Mammary epithelial cell (primary cell): ENCODE measurements at regions of chr14 and their contacts with region 1.

Region 1: GRCh38 chr14:64708148-64709004 is 4.2 kb downstream of the PLEKHG3 start:
- DNase-seq: peak; percentile 89
- H3K4me3 ChIP-seq: peak overlapping the region; percentile 23 to 39 (median 31)
- H3K27ac ChIP-seq: peak overlapping the region; percentile 86
- H3K4me1 ChIP-seq: peaks cover 47% of the 10 kb centered on the region
- H3K27me3 ChIP-seq: no peaks in the 10 kb centered on the region
- CTCF ChIP-seq: no peak

Region 2: GRCh38 chr14:64604881-64605280 is 103.5 kb before region 1 on chr14:
- CTCF ChIA-PET with region 1: no interaction called
- dilution Hi-C with region 1: no loop called
- in situ Hi-C with region 1: no loop called
- intact Hi-C with region 1: no loop called
- DNase-seq: peak; percentile 57
- H3K4me3 ChIP-seq: no peak overlapping the region
- H3K27ac ChIP-seq: no peak overlapping the region
- H3K4me1 ChIP-seq: no peaks in the 10 kb centered on the region
- H3K27me3 ChIP-seq: peaks cover 4% of the 10 kb centered on the region
- CTCF ChIP-seq: no peak

Region 3: GRCh38 chr14:64720131-64720576 is 11.8 kb after region 1 on chr14:
- CTCF ChIA-PET with region 1: no interaction called
- dilution Hi-C with region 1: no loop called
- in situ Hi-C with region 1: no loop called
- intact Hi-C with region 1: loop called (anchors 1 kb)
- DNase-seq: peak; percentile 98
- H3K4me3 ChIP-seq: no peak overlapping the region
- H3K27ac ChIP-seq: peak overlapping the region; percentile 89
- H3K4me1 ChIP-seq: peaks cover 98% of the 10 kb centered on the region
- H3K27me3 ChIP-seq: no peaks in the 10 kb centered on the region
- CTCF ChIP-seq: no peak

Region 4: GRCh38 chr14:64726585-64726890 is 18.2 kb after region 1 on chr14:
- CTCF ChIA-PET with region 1: no interaction called
- dilution Hi-C with region 1: no loop called
- in situ Hi-C with region 1: no loop called
- intact Hi-C with region 1: loop called (anchors 1 kb)
- DNase-seq: peak; percentile 99
- H3K4me3 ChIP-seq: no peak overlapping the region
- H3K27ac ChIP-seq: peak overlapping the region; percentile 89
- H3K4me1 ChIP-seq: peaks cover 61% of the 10 kb centered on the region
- H3K27me3 ChIP-seq: no peaks in the 10 kb centered on the region
- CTCF ChIP-seq: no peak

Region 5: DNA sequence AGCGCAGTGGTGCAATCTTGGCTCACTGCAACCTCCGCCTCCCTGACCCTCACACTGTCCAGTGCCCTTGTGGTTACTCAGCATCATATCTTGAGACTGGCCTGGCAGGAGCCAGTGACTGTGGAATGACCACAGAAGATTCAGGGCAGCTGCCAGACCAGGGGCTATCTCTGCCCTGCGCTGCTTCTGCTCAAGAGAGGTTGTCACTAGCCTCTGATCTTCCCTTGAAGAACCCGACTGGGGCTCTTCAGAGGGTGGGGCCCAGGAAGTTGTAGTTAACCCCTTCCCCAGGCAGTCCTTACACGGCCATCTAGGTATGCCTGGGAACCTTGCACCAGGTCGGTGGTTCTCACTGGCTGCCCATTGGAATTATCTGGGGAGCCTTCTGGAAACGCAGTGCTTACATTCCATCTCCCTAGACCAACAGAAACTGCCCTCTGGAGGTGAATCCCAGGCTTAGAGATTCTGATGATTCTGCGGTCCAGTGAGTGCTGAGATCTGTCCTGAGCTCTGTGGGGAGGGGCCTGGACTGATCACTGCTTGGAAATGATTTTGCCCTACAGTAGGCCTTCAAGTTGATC is 37.2 kb after region 1 on chr14:
- CTCF ChIA-PET with region 1: interaction called, 3 read pairs
- dilution Hi-C with region 1: loop called (anchors 5 kb)
- in situ Hi-C with region 1: no loop called
- intact Hi-C with region 1: no loop called
- DNase-seq: no peak
- H3K4me3 ChIP-seq: no peak overlapping the region
- H3K27ac ChIP-seq: no peak overlapping the region
- H3K4me1 ChIP-seq: peaks cover 8% of the 10 kb centered on the region
- H3K27me3 ChIP-seq: no peaks in the 10 kb centered on the region
- CTCF ChIP-seq: peak in 1 of 2 donors; percentile 39